A673 (cell line): ENCODE measurements at regions of chr9 and their contacts with region 1.

Region 1: DNA sequence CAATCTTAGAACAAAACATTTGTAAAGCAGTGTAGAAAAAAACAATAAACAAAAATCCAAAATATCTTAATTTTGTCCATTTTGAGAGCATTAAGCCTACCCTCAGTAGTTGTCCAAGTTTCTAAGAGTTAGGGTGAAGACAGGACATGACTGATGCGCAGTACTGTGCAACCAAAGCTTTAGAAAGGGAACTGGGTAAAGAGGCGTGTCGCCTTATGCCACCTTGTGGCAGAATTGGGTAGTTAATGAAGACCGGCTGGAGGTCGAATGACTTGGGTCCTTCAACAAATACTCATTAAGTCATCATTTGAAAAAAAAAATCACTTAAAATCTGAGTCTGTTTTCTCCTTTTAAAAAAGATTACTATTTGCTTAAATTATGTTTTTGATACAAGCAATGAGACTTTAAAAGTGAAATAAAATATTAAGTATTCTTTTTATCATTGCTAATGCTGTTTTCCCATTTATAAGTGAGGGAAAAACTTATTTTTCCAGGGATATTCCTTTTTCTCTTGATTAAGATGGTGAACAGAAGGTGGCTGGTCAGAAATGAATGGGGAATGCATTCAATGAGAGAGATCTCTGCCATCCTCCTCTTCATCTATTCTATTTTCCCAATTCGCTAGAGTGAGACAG is 3.5 kb upstream of the RNF20 start:
- DNase-seq: peak; percentile 80
- H3K4me3 ChIP-seq: no peak overlapping the region
- H3K27ac ChIP-seq: no peak overlapping the region
- H3K4me1 ChIP-seq: no peaks in the 10 kb centered on the region
- H3K27me3 ChIP-seq: peaks cover 9% of the 10 kb centered on the region
- CTCF ChIP-seq: peak; percentile 85

Region 2: DNA sequence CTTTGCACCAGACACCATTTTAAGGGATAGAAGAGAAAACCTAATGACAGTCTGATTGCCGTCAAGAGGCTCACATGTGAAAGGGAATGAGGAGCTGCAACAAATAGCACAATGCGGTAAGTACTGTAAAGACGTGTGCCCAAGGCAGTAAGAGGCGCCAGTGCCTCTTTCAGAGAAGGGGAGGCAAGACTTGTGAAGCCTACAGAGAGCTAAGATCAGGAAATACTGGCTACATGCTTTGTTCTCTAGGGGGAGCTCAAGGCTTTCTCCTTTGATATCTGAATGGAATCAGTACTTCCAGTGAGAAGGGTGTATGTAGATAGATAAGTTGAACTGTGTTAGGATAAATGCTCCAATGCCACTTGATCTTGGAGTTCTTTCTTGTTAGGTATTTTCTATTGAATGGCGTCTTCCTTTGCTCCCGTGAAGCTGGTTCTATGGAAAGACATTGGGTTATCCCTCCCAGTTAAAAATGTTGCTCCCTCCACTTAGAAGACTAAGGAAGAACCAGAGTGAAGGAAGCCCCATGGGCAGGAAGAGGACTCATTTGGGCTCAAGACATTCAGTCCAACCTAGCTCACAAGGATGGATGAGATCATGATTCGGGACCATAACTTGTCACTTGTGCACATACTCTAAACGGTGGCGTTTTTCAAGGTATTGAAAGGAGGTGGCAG is 71.1 kb before region 1 on chr9:
- CTCF ChIA-PET with region 1: interaction called, 18 read pairs
- POLR2A ChIA-PET with region 1: no interaction called
- intact Hi-C with region 1: loop called (anchors 1 kb)
- DNase-seq: peak; percentile 82
- H3K4me3 ChIP-seq: no peak overlapping the region
- H3K27ac ChIP-seq: no peak overlapping the region
- H3K4me1 ChIP-seq: no peaks in the 10 kb centered on the region
- H3K27me3 ChIP-seq: no peaks in the 10 kb centered on the region
- CTCF ChIP-seq: peak; percentile 78